ENCODE measurements at regions of chrX and their contacts with region 1.

Region 1: GRCh38 chrX:12974796-12975669 is at the start of gene TMSB4X:
- DNase-seq: no peak
- ATAC-seq: peak; percentile 91
- H3K4me3 ChIP-seq: peak within 1 kb of the TSS; percentile 57 to 79
- H3K27ac ChIP-seq: peak within 1 kb of the TSS; percentile 71
- H3K4me1 ChIP-seq: peaks cover 0 to 10% of the 10 kb centered on the region in 2 experiments; a peak in 2 of 4 replicates
- H3K27me3 ChIP-seq: no peaks in the 10 kb centered on the region
- CTCF ChIP-seq: no peak
- POLR2A ChIP-seq: peak; percentile 96
- RAD21 ChIP-seq: no peak; the same call in 1 of the 2 replicates
- total RNA-seq, gene TMSB4X: 407 TPM

Region 2: GRCh38 chrX:13051529-13052172 is 76.6 kb after region 1 on chrX:
- CTCF ChIA-PET with region 1: no interaction called
- POLR2A ChIA-PET with region 1: no interaction called
- RAD21 ChIA-PET with region 1: no interaction called
- intact Hi-C with region 1: no loop called
- DNase-seq: no peak
- ATAC-seq: no peak
- H3K4me3 ChIP-seq: no peak overlapping the region
- H3K27ac ChIP-seq: no peak overlapping the region
- H3K4me1 ChIP-seq: no peaks in the 10 kb centered on the region
- H3K27me3 ChIP-seq: no peaks in the 10 kb centered on the region
- CTCF ChIP-seq: no peak
- POLR2A ChIP-seq: no peak
- RAD21 ChIP-seq: no peak

Region 3: DNA sequence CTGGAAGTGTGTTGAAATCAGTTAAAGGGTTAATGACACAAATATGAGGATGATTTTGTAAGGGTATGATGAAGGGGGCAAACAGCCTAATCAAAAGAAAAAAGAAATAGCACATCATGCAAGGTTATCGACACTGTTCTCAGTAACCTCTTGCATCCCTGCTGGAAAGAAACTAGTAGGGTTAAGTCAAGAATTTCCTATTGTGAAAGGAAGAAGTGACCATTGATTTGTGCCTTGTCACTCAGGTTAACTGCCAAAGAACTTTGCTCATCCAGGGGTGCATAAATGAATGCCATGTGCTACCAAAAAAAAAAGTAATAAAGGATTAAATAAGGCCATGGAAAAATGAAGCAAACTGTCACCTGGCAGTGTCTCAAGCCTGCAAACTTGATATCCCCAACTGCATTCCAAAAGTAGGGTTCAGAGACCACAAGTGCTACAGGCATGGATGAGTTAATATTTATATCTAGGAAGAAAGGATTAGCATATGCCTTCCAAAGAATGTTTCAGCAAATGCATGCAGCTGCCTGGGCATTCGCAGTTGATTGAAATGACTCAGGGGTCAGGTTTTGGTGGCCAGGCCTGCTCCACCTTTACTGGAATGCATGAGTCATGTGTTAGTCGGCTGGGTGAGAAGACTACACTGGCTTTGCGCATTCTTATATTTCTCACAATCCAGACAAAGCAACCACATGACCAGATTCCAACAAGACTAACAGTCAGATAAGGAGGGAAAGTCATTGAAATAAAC is 423.2 kb after region 1 on chrX:
- CTCF ChIA-PET with region 1: no interaction called
- POLR2A ChIA-PET with region 1: no interaction called
- RAD21 ChIA-PET with region 1: no interaction called
- intact Hi-C with region 1: loop called (anchors 2 kb)
- DNase-seq: peak; percentile 89
- ATAC-seq: peak; percentile 96
- H3K4me3 ChIP-seq: peak overlapping the region in 1 of 2 experiments; percentile 28; a peak in 2 of 4 replicates
- H3K27ac ChIP-seq: peak overlapping the region; percentile 68; the same call in 1 of the 2 replicates
- H3K4me1 ChIP-seq: peaks cover 13 to 28% of the 10 kb centered on the region in 2 experiments
- H3K27me3 ChIP-seq: no peaks in the 10 kb centered on the region
- CTCF ChIP-seq: no peak
- POLR2A ChIP-seq: no peak
- RAD21 ChIP-seq: peak; percentile 15; the same call in 1 of the 2 replicates